Esophagus muscularis mucosa (tissue), 4 donors: ENCODE measurements at regions of chr16 and their contacts with region 1.

Region 1: GRCh38 chr16:9008601-9009260 is 45.0 kb upstream of the USP7 start:
- DNase-seq: peak; percentile 93
- H3K4me3 ChIP-seq: peak overlapping the region; percentile 25 to 45 (median 36)
- H3K27ac ChIP-seq: no peak overlapping the region
- H3K4me1 ChIP-seq: peaks cover 8 to 14% (median 11%) of the 10 kb centered on the region in 4 donors
- H3K27me3 ChIP-seq: peaks cover 0 to 17% (median 0%) of the 10 kb centered on the region in 4 donors
- CTCF ChIP-seq: peak; percentile 60 to 86 (median 71)
- EP300 ChIP-seq: no peak
- POLR2A ChIP-seq: no peak

Region 2: DNA sequence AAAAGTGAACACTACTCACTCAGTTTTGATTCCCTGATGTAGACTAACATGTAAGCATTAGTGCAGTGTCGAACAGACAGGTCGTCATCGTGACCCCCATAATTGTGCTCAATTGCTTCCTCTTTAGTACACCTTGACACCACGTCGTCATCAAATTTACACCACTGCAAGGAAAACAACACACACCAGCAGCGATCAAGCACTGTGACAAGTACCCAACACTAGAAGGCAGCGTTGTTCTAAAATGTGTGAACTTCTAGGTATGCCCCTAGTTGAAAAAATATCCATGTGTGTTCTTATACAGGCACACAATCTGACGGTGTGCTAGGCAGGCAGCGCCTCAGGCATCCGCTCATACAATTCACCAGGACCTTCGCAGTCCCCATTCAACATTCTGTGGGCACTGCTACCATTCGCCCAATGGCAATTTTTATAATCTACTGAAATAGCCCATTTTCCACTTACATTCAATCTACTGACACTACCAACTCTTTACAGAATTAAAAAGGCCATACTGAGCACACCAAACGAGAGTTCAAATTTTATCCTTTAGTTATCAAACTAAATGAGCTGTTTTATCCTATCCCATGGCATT is 103.5 kb before region 1 on chr16:
- intact Hi-C with region 1: loop called (anchors 10 kb)
- DNase-seq: no peak
- H3K4me3 ChIP-seq: no peak overlapping the region
- H3K27ac ChIP-seq: no peak overlapping the region
- H3K4me1 ChIP-seq: no peaks in the 10 kb centered on the region
- H3K27me3 ChIP-seq: no peaks in the 10 kb centered on the region
- CTCF ChIP-seq: peak in 1 of 3 experiments; percentile 30
- EP300 ChIP-seq: no peak
- POLR2A ChIP-seq: no peak

Region 3: GRCh38 chr16:8936421-8936820 is 72.3 kb before region 1 on chr16:
- intact Hi-C with region 1: loop called (anchors 5 kb)
- DNase-seq: no peak
- H3K4me3 ChIP-seq: no peak overlapping the region
- H3K27ac ChIP-seq: no peak overlapping the region
- H3K4me1 ChIP-seq: peaks cover 41 to 78% (median 65%) of the 10 kb centered on the region in 4 donors
- H3K27me3 ChIP-seq: no peaks in the 10 kb centered on the region
- CTCF ChIP-seq: peak in 2 of 3 experiments; percentile 9 to 42
- EP300 ChIP-seq: no peak
- POLR2A ChIP-seq: no peak

Region 4: DNA sequence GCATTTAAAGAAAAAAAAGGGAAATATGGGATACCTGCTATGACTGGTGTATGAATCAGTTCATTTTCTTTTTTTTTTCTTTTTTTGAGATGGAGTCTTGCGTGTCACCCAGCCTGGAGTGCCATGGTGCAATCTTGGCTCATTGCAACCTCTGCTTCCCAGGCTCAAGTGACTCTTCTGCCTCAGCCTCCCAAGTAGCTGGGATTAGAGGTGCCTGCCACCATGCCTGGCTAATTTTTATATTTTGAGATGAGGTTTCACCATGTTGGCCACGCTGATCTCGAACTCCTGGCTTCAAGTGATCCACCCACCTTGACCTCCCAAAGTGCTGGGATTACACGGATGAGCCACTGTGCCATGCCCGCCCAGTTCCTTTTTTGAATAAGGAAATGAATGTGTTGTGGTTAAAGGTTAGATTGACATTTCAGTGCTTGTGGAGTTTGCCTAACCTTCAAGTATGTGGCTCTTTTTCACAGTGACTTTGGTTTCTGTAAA is 90.4 kb after region 1 on chr16:
- intact Hi-C with region 1: no loop called
- DNase-seq: no peak
- H3K4me3 ChIP-seq: no peak overlapping the region
- H3K27ac ChIP-seq: peak overlapping the region; percentile 8 to 54 (median 25)
- H3K4me1 ChIP-seq: peaks cover 97 to 100% (median 100%) of the 10 kb centered on the region in 4 donors
- H3K27me3 ChIP-seq: no peaks in the 10 kb centered on the region
- CTCF ChIP-seq: no peak
- EP300 ChIP-seq: no peak
- POLR2A ChIP-seq: no peak